PC-9 (cell line): ENCODE measurements at regions of chr12 and their contacts with region 1.

Region 1: DNA sequence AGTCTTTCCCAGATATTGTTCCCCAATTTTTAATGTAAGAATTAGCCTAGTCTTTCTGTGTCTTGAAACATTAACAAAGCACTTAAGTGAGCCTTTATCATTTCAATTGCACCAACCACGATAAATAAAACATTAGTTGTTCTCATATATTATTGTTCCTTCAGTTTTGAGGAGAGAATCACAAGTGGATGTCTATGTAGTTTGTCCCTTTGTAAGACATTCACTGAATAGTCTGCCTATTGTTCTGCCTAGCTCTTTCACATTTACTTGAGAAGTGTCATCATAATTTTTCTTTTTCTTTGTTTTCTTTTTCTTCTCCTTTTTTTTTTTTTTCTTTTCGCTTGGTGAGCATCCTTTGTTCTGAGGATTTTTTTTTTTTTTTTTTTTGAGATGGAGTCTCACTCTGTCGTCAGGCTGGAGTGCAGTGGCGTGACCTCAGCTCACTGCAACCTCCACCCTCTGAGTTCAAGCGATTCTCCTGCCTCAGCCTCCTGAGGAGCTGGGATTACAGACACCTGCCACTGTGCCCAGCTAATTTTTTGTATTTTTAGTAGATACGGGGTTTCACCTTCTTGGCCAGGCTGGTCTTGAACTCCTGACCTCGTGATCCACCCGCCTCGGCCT is 129.7 kb downstream of the SYT1 start:
- DNase-seq: no peak
- H3K4me3 ChIP-seq: no peak overlapping the region
- H3K27ac ChIP-seq: no peak overlapping the region
- H3K4me1 ChIP-seq: no peaks in the 10 kb centered on the region
- H3K27me3 ChIP-seq: no peaks in the 10 kb centered on the region
- CTCF ChIP-seq: no peak

Region 2: DNA sequence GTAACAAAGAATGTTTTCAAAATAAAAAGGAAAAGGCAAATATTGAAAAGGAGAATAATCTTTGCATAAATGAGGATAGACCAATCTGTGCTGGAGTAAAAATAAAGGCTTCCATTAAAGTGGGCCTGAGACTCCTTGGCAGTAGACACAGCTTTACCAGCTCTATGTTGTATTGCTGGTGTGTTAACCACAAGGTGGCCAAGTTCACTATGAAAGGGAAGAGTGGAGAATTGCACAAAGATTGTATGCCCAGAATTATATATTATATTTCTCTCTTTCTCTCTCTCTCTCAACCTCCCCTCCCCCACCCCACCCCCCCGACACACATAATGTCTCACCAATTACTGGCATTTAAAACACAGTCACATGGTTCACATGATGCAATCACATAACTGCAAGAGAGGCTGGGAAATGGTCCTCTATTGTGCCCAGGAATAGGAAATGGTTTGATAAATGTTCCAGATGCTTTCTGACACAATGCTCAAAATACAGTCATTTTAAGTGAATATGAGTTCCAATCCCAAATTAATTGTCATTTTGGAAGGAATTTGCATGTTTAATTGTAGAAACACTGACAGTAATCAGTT is 352.4 kb before region 1 on chr12:
- CTCF ChIA-PET with region 1: no interaction called
- POLR2A ChIA-PET with region 1: interaction called, 15 read pairs
- intact Hi-C with region 1: no loop called
- DNase-seq: no peak
- H3K4me3 ChIP-seq: no peak overlapping the region
- H3K27ac ChIP-seq: no peak overlapping the region
- H3K4me1 ChIP-seq: no peaks in the 10 kb centered on the region
- H3K27me3 ChIP-seq: no peaks in the 10 kb centered on the region
- CTCF ChIP-seq: 0 out of 2 replicates have a peak, but pooled peaks have one; percentile 10

Region 3: GRCh38 chr12:78863482-78864402 is 130.5 kb before region 1 on chr12:
- CTCF ChIA-PET with region 1: no interaction called
- POLR2A ChIA-PET with region 1: no interaction called
- intact Hi-C with region 1: no loop called
- DNase-seq: peak; percentile 43 to 56
- H3K4me3 ChIP-seq: peak overlapping the region; percentile 96
- H3K27ac ChIP-seq: peak overlapping the region; percentile 10; the same call in 1 of the 2 replicates
- H3K4me1 ChIP-seq: 0 out of 2 replicates have a peak, but pooled peaks cover 7% of the 10 kb centered on the region
- H3K27me3 ChIP-seq: no peaks in the 10 kb centered on the region
- CTCF ChIP-seq: no peak

Region 4: GRCh38 chr12:78963439-78964222 is 30.6 kb before region 1 on chr12:
- CTCF ChIA-PET with region 1: no interaction called
- POLR2A ChIA-PET with region 1: no interaction called
- intact Hi-C with region 1: no loop called
- DNase-seq: peak in 1 of 2 experiments; percentile 10
- H3K4me3 ChIP-seq: no peak overlapping the region
- H3K27ac ChIP-seq: no peak overlapping the region
- H3K4me1 ChIP-seq: 0 out of 2 replicates have a peak, but pooled peaks cover 7% of the 10 kb centered on the region
- H3K27me3 ChIP-seq: no peaks in the 10 kb centered on the region
- CTCF ChIP-seq: no peak